ENCODE measurements at regions of chr12 and their contacts with region 1.

Region 1: DNA sequence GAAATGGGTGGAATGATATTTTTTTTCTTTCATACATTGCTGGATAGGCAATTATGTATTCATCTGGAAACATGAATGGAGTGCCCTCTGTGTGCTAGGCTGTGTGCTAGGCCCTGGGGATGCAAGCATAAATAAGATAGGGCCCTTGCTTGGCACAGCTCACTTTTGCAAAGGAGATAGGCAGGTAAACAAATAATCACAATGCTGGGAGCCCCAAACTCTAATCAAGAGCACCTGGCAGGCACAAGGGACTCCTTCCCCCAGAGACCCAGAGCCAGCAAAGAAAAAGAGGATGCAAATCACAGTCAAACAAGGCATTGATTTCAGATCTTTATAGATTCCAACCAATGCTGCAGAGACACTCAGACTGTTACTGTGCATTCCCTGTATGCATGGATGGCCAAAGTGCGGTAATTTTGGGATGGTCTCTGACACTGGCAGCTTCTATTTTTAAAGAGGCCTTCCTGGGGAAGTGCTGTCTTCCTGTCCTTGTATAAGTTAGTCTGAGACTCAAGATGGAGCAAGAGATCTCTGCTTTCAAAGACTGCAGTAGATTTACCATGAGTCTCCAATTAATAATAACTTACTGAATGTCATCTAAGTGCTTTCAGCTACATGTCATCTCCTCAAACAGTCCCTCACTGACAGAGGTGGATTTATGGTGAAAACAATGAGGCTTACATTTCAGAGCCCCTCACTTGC is 45.1 kb upstream of the CPM start:
- DNase-seq: no peak
- H3K4me3 Mint-ChIP-seq: no peak overlapping the region
- H3K27ac Mint-ChIP-seq: no peak overlapping the region
- H3K4me1 Mint-ChIP-seq: peaks cover 44% of the 10 kb centered on the region
- H3K27me3 Mint-ChIP-seq: no peaks in the 10 kb centered on the region
- CTCF ChIP-seq: no peak

Region 2: GRCh38 chr12:68899251-68899771 is 78.7 kb before region 1 on chr12:
- CTCF ChIA-PET with region 1: no interaction called
- intact Hi-C with region 1: loop called (anchors 2 kb)
- DNase-seq: peak; percentile 79
- H3K4me3 Mint-ChIP-seq: no peak overlapping the region
- H3K27ac Mint-ChIP-seq: no peak overlapping the region
- H3K4me1 Mint-ChIP-seq: peaks cover 23% of the 10 kb centered on the region
- H3K27me3 Mint-ChIP-seq: no peaks in the 10 kb centered on the region
- CTCF ChIP-seq: peak; percentile 45

Region 3: GRCh38 chr12:68939505-68939904 is 38.6 kb before region 1 on chr12:
- CTCF ChIA-PET with region 1: no interaction called
- intact Hi-C with region 1: no loop called
- DNase-seq: no peak
- H3K4me3 Mint-ChIP-seq: no peak overlapping the region
- H3K27ac Mint-ChIP-seq: no peak overlapping the region
- H3K4me1 Mint-ChIP-seq: peaks cover 29% of the 10 kb centered on the region
- H3K27me3 Mint-ChIP-seq: no peaks in the 10 kb centered on the region
- CTCF ChIP-seq: no peak

Region 4: DNA sequence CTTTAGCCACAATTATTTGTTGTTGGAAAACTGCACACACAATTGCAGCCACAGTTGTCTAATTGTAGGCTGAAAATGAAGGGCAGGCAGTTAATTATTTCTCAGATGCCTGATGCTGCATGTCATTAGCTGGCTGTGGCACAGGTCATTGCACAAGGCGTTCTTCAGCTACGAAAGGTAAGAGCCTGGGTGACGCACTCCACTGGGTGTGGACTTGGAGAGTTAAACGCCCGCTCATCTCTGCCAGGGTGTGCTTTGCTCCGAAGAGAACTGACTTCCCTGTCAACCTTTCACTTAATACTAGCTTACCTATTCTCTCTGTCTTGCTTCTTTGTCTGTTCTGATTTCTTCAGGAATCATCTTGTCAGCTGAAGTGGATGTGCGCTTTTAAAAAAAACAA is 46.4 kb after region 1 on chr12:
- CTCF ChIA-PET with region 1: interaction called, 4 read pairs
- intact Hi-C with region 1: loop called (anchors 5 kb)
- DNase-seq: peak; percentile 90
- H3K4me3 Mint-ChIP-seq: peak overlapping the region; percentile 5
- H3K27ac Mint-ChIP-seq: peak overlapping the region; percentile 75
- H3K4me1 Mint-ChIP-seq: peaks cover 37% of the 10 kb centered on the region
- H3K27me3 Mint-ChIP-seq: no peaks in the 10 kb centered on the region
- CTCF ChIP-seq: no peak

Region 5: GRCh38 chr12:69052613-69053408 is 74.8 kb after region 1 on chr12:
- CTCF ChIA-PET with region 1: interaction called, 3 read pairs
- intact Hi-C with region 1: loop called (anchors 5 kb)
- DNase-seq: peak; percentile 88
- H3K4me3 Mint-ChIP-seq: no peak overlapping the region
- H3K27ac Mint-ChIP-seq: peak overlapping the region; percentile 81
- H3K4me1 Mint-ChIP-seq: peaks cover 25% of the 10 kb centered on the region
- H3K27me3 Mint-ChIP-seq: no peaks in the 10 kb centered on the region
- CTCF ChIP-seq: peak; percentile 14

Region 6: GRCh38 chr12:69341328-69341727 is 363.3 kb after region 1 on chr12:
- CTCF ChIA-PET with region 1: no interaction called
- intact Hi-C with region 1: no loop called
- DNase-seq: no peak
- H3K4me3 Mint-ChIP-seq: no peak overlapping the region
- H3K27ac Mint-ChIP-seq: no peak overlapping the region
- H3K4me1 Mint-ChIP-seq: peaks cover 69% of the 10 kb centered on the region
- H3K27me3 Mint-ChIP-seq: no peaks in the 10 kb centered on the region
- CTCF ChIP-seq: no peak

Measured in Calu3 (cell line).